Calu3 (cell line): ENCODE measurements at regions of chr4 and their contacts with region 1.

Region 1: DNA sequence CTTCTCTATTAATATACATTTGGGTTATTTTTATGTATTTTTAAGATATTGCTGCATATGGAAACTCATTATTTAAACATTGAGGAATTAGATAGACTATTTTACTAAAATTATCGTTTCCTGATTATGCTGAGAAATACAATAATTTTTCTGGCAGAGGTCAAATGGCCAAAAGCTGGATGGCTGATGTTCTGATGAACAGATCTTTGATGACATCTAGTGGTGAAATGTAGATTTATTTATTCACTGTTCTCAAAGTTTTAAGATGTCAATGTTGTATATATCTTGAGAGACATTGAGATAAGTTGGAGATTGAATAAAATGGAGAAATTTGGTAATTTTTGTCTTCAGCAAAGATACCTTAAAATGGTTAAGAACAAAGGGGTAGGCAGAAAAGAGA is 96.2 kb downstream of the UGT8 start:
- DNase-seq: peak; percentile 1
- H3K4me3 Mint-ChIP-seq: no peak overlapping the region
- H3K27ac Mint-ChIP-seq: no peak overlapping the region
- H3K4me1 Mint-ChIP-seq: no peaks in the 10 kb centered on the region
- H3K27me3 Mint-ChIP-seq: no peaks in the 10 kb centered on the region
- CTCF ChIP-seq: peak; percentile 30

Region 2: GRCh38 chr4:113761620-113762185 is 933.1 kb before region 1 on chr4 and contains the start of gene CAMK2D:
- CTCF ChIA-PET with region 1: no interaction called
- intact Hi-C with region 1: no loop called
- DNase-seq: peak; percentile 79
- H3K4me3 Mint-ChIP-seq: peak within 1 kb of the TSS; percentile 93
- H3K27ac Mint-ChIP-seq: peak within 1 kb of the TSS; percentile 99
- H3K4me1 Mint-ChIP-seq: peaks cover 30% of the 10 kb centered on the region
- H3K27me3 Mint-ChIP-seq: no peaks in the 10 kb centered on the region
- CTCF ChIP-seq: no peak
- total RNA-seq, gene CAMK2D: 22.1 and 28.3 TPM in 2 replicates

Region 3: GRCh38 chr4:114417214-114417613 is 277.6 kb before region 1 on chr4:
- CTCF ChIA-PET with region 1: no interaction called
- intact Hi-C with region 1: loop called (anchors 1 kb)
- DNase-seq: no peak
- H3K4me3 Mint-ChIP-seq: no peak overlapping the region
- H3K27ac Mint-ChIP-seq: no peak overlapping the region
- H3K4me1 Mint-ChIP-seq: peaks cover 9% of the 10 kb centered on the region
- H3K27me3 Mint-ChIP-seq: no peaks in the 10 kb centered on the region
- CTCF ChIP-seq: no peak

Region 4: DNA sequence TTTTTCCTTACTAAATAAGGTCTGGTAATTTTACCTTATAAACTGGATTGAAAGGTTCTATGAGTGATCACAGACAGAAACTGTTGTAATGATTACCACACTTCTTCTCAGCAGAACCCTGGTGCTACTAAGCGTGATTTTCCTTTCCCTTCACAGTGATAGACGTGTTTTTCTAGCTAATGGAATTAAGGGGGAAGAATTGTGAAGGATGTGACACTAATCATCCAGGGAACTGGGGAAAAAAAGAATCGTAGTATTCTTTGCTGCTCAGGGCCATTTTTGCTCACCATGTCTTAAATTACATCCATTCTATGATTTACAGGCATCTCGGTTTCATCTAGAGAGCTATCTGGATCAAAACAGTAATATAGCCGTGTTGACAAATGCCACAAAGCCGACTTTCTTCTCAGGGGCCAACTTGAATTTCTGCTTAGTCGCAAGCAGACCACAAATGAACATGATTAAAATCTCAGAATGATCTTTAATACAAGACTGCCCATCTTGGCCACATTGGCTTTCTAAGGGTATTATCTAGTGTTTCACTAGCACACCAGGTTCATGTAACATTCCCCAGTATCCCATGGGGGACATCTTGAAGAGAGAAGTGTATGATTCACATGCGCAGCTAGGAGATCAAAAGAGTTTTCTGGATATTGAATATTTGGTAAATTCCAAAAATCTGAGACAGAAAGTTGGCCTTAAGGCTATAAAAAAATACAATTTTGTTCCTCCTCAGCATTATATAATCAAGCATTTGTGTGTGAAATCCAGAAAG is 57.8 kb after region 1 on chr4:
- CTCF ChIA-PET with region 1: no interaction called
- intact Hi-C with region 1: no loop called
- DNase-seq: no peak
- H3K4me3 Mint-ChIP-seq: no peak overlapping the region
- H3K27ac Mint-ChIP-seq: no peak overlapping the region
- H3K4me1 Mint-ChIP-seq: no peaks in the 10 kb centered on the region
- H3K27me3 Mint-ChIP-seq: no peaks in the 10 kb centered on the region
- CTCF ChIP-seq: no peak

Region 5: GRCh38 chr4:114807759-114808404 is 113.1 kb after region 1 on chr4:
- CTCF ChIA-PET with region 1: no interaction called
- intact Hi-C with region 1: no loop called
- DNase-seq: peak; percentile 1
- H3K4me3 Mint-ChIP-seq: no peak overlapping the region
- H3K27ac Mint-ChIP-seq: no peak overlapping the region
- H3K4me1 Mint-ChIP-seq: no peaks in the 10 kb centered on the region
- H3K27me3 Mint-ChIP-seq: no peaks in the 10 kb centered on the region
- CTCF ChIP-seq: peak; percentile 67